ENCODE measurements at regions of chr20 and their contacts with region 1.

Region 1: DNA sequence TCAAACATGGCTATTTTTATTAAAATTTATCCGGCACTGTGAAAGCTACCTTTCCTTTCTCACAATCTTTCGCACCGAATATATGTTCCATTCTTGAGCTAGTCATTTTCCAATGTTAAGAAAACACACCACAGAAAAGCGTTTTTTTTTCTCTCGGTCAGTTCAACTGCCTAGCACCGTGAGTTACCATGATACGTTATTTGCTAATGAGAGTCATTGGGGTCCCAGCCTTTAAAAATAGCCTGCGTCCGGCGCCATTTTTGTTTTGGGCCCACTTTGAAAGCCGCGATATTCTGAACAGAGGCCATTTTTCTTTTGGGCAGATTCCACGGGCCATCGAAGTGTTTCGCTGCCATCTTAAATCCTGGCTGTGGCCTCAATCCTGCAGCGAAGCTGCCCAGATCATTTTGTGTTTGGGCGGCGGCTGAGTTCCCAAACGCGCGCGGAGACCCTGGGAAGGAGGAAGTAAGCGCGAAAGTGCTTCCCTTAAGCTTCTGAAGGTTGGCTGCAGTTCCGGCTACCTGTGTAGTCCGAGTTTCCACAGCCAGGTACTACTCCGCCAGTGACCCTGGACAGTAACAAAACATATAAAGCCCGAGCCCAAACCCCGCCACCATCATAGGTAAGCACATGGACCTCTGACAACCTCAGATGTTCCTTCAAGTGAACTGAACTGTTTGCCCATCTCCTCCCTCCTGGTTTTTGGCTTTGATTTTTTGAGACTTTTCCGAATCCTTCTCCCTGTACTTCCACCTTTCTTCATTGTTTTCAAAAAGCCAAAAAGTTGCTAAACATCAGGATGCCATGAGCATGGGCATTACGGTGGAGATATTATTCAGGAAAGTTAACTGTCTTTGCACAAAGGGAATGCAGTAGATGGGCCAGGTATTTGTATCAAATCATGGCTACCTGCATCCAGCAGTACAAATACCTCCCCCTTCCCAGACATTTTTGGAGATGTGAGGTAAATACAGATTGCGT is at the start of gene SLX4IP:
- DNase-seq: peak; percentile 95
- H3K4me3 Mint-ChIP-seq: peak within 1 kb of the TSS; percentile 92
- H3K27ac Mint-ChIP-seq: peak within 1 kb of the TSS; percentile 98
- H3K4me1 Mint-ChIP-seq: peaks cover 35% of the 10 kb centered on the region
- H3K27me3 Mint-ChIP-seq: no peaks in the 10 kb centered on the region
- total RNA-seq, gene SLX4IP: 5.9 and 6.6 TPM in 2 replicates

Region 2: DNA sequence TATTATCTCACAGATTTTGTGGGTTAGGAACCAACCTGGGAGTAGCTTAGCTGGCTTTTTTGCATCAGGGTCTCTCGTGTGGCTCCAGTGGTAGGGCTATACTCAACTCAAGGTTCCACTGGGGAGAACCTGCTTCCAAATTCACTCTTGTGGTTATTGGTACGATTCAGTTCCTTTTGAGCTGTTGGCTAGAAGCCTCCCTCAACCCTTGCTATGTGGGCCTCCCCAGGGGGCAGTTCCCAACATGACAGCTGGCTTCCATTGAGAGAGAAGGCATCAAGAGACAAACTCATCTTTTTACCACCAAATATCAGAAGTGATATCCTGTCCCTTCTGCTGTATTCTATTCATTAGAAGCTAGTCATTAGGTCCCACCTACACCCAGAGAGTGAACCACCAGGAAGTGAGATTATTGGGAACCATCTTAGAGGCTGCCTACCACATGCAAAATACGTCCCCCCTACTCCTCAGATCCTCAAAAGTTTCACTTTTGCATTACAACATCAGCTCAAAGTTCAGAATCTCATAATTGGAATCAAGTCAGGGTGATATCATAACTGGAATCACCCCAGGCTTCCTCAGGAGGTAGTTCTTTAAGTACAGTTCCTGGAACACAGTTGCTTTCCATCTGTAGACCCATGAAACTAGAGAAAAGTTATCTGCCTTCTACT is 32.0 kb before region 1 on chr20:
- intact Hi-C with region 1: no loop called
- DNase-seq: no peak
- H3K4me3 Mint-ChIP-seq: no peak overlapping the region
- H3K27ac Mint-ChIP-seq: no peak overlapping the region
- H3K4me1 Mint-ChIP-seq: peaks cover 9% of the 10 kb centered on the region
- H3K27me3 Mint-ChIP-seq: no peaks in the 10 kb centered on the region

Region 3: DNA sequence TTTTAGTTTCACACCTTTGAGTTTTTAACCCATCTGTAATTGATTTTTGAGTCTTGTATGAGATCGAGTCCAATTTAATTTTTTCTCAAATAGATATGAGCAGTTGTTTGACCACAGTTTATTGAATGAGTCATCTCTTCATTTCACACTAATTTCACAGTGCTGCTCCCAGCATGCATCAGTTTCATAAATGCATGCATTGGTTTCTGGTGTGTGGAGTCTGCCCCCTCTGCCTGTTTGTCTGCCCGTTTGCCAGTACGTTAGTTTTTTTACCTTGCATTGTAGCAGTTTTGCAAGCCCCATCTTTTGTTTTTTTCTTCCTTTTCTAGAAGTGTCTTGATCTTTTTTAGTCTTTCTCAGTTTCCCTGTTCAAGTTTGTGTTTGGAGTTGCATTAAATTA is 11.9 kb after region 1 on chr20:
- intact Hi-C with region 1: loop called (anchors 1 kb)
- DNase-seq: peak; percentile 82
- H3K4me3 Mint-ChIP-seq: peak overlapping the region; percentile 65
- H3K27ac Mint-ChIP-seq: peak overlapping the region; percentile 76
- H3K4me1 Mint-ChIP-seq: peaks cover 25% of the 10 kb centered on the region
- H3K27me3 Mint-ChIP-seq: no peaks in the 10 kb centered on the region

Region 4: DNA sequence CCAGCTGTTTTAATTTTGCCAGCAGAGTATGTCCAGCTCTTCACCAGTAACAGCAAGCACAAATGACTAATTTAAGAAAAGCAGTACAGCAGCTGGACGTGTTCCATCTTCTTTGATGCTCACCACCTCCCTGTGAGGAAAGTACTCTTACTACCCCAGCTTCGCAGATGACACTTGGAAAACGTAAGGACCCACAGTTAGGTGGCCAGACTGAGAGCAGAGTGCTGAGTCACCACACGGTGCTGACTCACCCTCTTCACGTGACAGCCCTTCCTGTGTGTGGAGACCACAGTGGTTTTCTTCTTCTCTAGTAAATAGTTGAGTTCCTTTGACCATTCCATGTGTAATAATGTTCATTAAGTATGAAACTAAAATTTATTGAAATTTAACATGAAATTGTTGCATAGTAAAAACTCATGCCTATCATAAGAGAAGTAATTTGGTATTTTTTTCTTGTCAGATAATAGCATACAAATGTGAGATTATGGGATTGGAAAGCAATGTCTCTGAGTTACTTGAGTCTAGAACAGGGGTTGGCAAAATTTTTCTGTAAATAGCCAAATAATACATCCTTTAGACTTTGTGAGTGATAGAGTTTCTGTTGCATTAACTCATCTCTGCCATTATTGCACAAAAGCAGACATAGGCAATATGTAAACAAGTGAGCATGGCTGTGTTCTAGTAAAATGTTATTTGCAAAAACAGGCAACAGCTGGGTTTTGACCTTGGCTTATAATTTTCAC is 76.6 kb after region 1 on chr20:
- intact Hi-C with region 1: loop called (anchors 1 kb)
- DNase-seq: peak; percentile 90
- H3K4me3 Mint-ChIP-seq: peak overlapping the region; percentile 50
- H3K27ac Mint-ChIP-seq: peak overlapping the region; percentile 82
- H3K4me1 Mint-ChIP-seq: peaks cover 38% of the 10 kb centered on the region
- H3K27me3 Mint-ChIP-seq: peaks cover 3% of the 10 kb centered on the region

Region 5: GRCh38 chr20:10596726-10597125 is 161.6 kb after region 1 on chr20:
- intact Hi-C with region 1: loop called (anchors 2 kb)
- DNase-seq: no peak
- H3K4me3 Mint-ChIP-seq: no peak overlapping the region
- H3K27ac Mint-ChIP-seq: no peak overlapping the region
- H3K4me1 Mint-ChIP-seq: peaks cover 15% of the 10 kb centered on the region
- H3K27me3 Mint-ChIP-seq: no peaks in the 10 kb centered on the region

Region 6: DNA sequence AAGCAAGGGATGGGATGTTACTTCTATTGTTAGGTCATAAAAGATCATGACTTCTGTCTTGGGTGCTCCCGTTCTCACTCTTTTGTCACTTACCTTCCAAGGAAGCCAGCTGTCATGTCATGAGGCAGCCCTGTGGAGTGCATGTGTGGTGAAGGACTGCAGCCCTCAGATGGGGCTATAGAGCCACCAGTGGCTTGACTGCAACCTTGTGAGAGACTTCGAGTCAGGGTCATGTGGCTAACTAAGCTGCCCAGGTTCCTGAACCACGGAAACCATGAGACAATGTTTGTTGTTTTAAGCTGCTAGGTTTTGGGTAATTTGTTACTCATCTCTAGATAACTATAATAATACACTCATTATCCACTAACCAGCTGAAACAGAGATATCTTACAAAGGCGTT is 1959.7 kb after region 1 on chr20:
- intact Hi-C with region 1: no loop called
- DNase-seq: no peak
- H3K4me3 Mint-ChIP-seq: no peak overlapping the region
- H3K27ac Mint-ChIP-seq: no peak overlapping the region
- H3K4me1 Mint-ChIP-seq: no peaks in the 10 kb centered on the region
- H3K27me3 Mint-ChIP-seq: no peaks in the 10 kb centered on the region